MCF 10A (cell line): ENCODE measurements at regions of chr1 and their contacts with region 1.

Region 1: GRCh38 chr1:185317034-185317885 is at the start of gene IVNS1ABP:
- DNase-seq: peak; percentile 98
- H3K4me3 Mint-ChIP-seq: peak within 1 kb of the TSS; percentile 85
- H3K27ac Mint-ChIP-seq: peak within 1 kb of the TSS; percentile 94
- H3K4me1 Mint-ChIP-seq: peaks cover 36% of the 10 kb centered on the region
- H3K27me3 Mint-ChIP-seq: no peaks in the 10 kb centered on the region
- CTCF ChIP-seq: no peak
- total RNA-seq, gene IVNS1ABP: 67.4 and 92.0 TPM in 2 replicates

Region 2: DNA sequence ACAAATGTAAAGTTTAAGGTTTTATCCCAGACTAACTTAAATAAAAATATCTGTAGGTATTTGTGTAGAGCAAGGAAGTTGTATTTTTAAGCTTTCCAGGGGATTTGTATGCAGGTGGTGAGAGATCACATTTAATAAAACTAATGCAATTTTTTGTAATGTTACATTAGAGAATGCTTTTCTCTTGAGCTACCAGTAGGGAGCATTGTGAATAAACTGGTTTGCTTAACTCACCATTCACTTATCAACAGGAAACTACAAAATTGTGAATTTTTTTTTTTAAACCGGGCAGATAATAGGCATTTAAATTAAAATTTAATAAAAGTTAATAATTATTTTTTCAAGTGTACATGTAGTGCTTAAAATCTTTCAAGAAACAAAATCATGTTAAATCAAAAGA is 78.8 kb before region 1 on chr1:
- CTCF ChIA-PET with region 1: interaction called, 5 read pairs
- POLR2A ChIA-PET with region 1: interaction called, 17 read pairs
- intact Hi-C with region 1: no loop called
- DNase-seq: peak; percentile 24
- H3K4me3 Mint-ChIP-seq: no peak overlapping the region
- H3K27ac Mint-ChIP-seq: no peak overlapping the region
- H3K4me1 Mint-ChIP-seq: no peaks in the 10 kb centered on the region
- H3K27me3 Mint-ChIP-seq: no peaks in the 10 kb centered on the region
- CTCF ChIP-seq: peak; percentile 25

Region 3: DNA sequence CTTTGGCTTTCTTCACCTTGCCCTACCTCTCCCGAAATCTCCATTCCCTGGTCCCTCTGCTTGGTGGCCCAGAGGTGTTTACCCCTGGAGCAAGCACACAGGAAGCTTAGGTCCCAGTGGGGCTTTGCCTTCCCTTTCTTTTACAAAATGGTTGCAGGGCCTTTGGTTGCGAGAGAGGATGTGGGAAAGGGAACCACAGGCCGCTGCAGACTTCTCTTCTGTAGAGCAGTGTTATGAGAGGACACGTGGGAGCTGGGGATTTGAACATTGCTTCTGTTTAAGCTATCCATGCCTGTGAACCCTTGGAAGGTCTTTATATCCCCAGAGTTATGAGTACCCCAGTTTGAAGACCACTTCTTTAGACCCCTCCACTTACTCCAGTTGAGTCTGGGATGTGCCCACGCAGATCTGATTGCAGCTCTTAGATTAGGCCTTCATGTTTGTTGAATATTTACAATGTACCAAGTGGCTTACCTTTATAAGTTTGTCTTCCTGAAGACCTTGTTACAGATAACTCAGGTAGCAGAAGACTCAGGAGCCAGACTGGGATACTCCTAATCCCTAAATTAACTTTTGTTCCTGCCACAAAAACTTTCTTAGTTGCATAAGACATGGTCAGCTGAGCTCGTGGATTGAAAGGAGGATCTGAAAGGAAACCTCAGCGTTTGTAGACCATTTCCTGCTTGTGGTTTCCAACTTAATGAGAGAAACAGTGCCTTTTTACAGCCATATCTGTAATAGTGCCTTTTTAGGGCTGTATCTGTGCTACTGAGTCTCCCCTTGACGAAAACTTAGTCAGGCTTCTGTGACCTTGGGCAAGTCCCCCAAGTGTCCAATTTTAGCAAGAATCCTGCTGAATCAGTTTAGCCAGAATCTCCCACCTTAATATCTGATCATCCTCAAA is 21.7 kb after region 1 on chr1:
- CTCF ChIA-PET with region 1: interaction called, 4 read pairs
- POLR2A ChIA-PET with region 1: interaction called, 20 read pairs
- intact Hi-C with region 1: no loop called
- DNase-seq: no peak
- H3K4me3 Mint-ChIP-seq: no peak overlapping the region
- H3K27ac Mint-ChIP-seq: no peak overlapping the region
- H3K4me1 Mint-ChIP-seq: no peaks in the 10 kb centered on the region
- H3K27me3 Mint-ChIP-seq: no peaks in the 10 kb centered on the region
- CTCF ChIP-seq: no peak

Region 4: GRCh38 chr1:185400052-185400451 is 82.8 kb after region 1 on chr1:
- CTCF ChIA-PET with region 1: interaction called, 3 read pairs
- POLR2A ChIA-PET with region 1: interaction called, 16 read pairs
- intact Hi-C with region 1: no loop called
- DNase-seq: peak; percentile 63
- H3K4me3 Mint-ChIP-seq: no peak overlapping the region
- H3K27ac Mint-ChIP-seq: no peak overlapping the region
- H3K4me1 Mint-ChIP-seq: peaks cover 10% of the 10 kb centered on the region
- H3K27me3 Mint-ChIP-seq: no peaks in the 10 kb centered on the region
- CTCF ChIP-seq: no peak

Region 5: DNA sequence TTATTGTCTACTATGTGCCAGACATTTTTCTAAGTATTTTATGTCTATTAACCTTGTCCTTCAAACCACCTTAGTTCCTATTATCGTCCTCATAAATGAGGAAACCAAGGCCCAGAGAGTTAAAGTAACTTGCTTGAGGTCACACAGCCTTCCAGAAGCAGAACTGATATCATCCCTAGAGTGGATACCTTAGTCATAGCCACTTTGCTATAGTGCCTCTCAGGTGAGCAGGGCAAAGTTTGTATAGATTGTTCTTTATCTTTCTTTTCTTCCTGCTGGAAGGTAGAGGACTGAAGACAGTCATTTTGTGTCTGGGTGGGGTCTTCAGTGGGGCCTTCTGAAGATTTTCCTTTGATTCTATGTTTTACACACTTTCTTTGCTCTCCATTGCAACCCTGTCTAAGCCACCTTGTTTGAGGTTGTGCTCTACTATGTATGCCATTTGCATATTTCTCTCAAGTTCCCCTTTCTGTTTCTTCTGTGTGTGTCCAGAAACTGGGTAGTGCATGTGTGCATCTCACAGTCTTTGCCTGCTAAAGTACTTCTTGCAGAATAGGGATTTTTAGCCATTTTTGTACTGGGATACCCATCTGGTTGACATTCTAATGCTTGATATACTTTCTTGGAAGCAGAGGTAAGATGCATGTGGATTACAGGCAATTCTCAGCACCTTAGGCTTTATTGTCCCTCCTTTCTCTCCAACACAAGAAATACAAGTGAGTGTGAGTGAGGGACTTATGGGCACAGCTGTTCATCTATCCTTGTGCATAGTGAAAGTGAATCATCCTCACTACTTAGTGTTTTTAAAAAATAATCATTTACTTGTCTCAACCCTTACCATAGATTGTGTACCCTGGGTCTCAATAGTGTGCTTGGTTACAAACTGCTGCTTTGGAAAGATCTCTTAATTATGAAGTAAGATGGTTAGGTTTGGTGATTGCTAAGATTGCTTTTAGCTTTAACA is 209.4 kb after region 1 on chr1:
- CTCF ChIA-PET with region 1: interaction called, 4 read pairs
- POLR2A ChIA-PET with region 1: interaction called, 17 read pairs
- intact Hi-C with region 1: no loop called
- DNase-seq: no peak
- H3K4me3 Mint-ChIP-seq: no peak overlapping the region
- H3K27ac Mint-ChIP-seq: no peak overlapping the region
- H3K4me1 Mint-ChIP-seq: no peaks in the 10 kb centered on the region
- H3K27me3 Mint-ChIP-seq: no peaks in the 10 kb centered on the region
- CTCF ChIP-seq: no peak

Region 6: DNA sequence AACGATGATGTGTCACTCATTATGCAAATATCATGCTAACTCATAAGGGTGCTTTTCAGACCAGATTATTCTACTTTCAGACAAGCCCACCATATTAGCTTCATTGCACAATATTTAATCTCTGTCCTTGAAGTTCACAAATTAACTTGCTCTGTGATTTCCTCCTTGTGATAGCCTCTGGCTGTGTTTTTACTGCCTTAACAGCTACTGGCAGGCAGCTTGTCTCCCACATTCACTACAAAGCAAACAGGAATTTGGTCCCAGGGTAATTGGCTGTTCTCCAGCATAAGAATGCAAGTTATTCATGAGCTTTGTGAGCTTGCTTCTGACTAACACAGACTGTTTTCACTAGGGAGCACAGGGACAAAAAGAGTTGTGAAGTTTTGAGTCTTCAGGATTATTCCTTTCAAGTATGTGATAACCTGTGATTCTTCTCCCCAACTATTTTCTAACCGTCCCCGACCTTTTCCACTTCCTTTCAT is 329.0 kb after region 1 on chr1:
- CTCF ChIA-PET with region 1: interaction called, 5 read pairs
- POLR2A ChIA-PET with region 1: interaction called, 40 read pairs
- intact Hi-C with region 1: loop called (anchors 5 kb)
- DNase-seq: peak; percentile 99
- H3K4me3 Mint-ChIP-seq: peak overlapping the region; percentile 68
- H3K27ac Mint-ChIP-seq: peak overlapping the region; percentile 88
- H3K4me1 Mint-ChIP-seq: peaks cover 29% of the 10 kb centered on the region
- H3K27me3 Mint-ChIP-seq: no peaks in the 10 kb centered on the region
- CTCF ChIP-seq: no peak